ENCODE measurements at regions of chr4 and their contacts with region 1.

Region 1: DNA sequence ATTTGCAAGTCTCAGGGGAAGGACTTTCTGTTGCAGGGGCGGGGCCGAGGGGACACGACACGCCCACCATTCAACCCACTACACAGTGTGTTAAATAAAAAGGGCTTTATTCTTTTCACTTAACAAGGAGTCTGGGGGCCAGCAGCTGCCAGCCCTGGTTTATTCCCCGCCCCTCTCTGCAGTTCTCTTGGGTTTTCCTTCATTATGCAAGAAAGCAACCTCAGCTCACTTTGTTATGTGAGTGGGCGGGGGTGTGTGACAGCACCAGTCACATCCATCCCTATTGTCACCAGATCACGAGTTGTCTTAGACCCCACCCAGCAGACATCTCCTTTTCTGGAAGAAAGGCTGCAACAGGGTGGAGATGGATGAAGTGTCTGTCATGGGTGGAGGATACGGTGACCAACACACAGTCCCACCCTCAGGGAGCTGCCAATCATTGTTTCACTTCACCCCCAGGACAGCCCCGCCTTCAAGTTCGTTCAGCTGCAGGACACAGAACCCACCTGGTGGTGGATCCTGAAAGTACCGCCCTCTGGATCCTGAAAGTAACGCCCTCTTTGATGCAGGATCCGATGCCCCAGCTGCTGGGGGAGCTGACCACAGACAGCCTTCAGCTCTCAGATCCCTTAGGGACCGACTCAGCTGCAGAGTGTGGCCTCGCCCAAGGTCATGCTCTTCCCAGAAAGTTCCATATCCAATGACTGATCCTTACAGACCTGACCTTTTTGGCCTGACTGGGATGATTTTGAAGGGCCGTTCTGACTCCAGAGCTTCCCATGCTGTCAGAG is 79.6 kb downstream of the SMIM20 start:
- DNase-seq: peak; percentile 65
- H3K4me3 ChIP-seq: peak overlapping the region; percentile 21
- H3K27ac ChIP-seq: no peak overlapping the region
- H3K4me1 ChIP-seq: peaks cover 12% of the 10 kb centered on the region
- CTCF ChIP-seq: peak; percentile 77

Region 2: DNA sequence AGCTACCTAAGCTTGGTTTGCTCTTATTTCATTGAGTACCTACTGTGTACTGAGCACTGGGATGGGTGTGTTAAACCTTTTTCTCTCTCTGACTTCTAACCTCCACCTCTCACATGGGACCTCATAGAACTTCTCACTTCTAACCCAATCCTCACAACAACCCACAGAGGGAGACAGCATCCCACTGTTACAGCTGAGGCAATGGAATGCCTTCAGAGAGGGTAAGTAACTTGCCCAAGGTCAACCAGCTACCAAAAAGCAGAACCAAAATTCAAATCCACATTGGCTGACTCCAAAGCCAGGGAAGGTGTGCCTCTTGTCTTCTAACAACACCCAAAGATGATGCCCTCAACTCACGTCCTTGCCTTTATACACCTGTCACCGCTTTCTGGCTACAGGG is 136.2 kb before region 1 on chr4:
- CTCF ChIA-PET with region 1: no interaction called
- POLR2A ChIA-PET with region 1: no interaction called
- intact Hi-C with region 1: loop called (anchors 1 kb)
- DNase-seq: peak; percentile 51
- H3K4me3 ChIP-seq: peak overlapping the region; percentile 13
- H3K27ac ChIP-seq: no peak overlapping the region
- H3K4me1 ChIP-seq: peaks cover 75% of the 10 kb centered on the region
- CTCF ChIP-seq: peak; percentile 75

Region 3: GRCh38 chr4:26325191-26325590 is 331.6 kb after region 1 on chr4:
- CTCF ChIA-PET with region 1: no interaction called
- POLR2A ChIA-PET with region 1: no interaction called
- intact Hi-C with region 1: loop called (anchors 2 kb)
- DNase-seq: peak; percentile 57
- H3K4me3 ChIP-seq: no peak overlapping the region
- H3K27ac ChIP-seq: no peak overlapping the region
- H3K4me1 ChIP-seq: peaks cover 23% of the 10 kb centered on the region
- CTCF ChIP-seq: peak; percentile 82

Region 4: GRCh38 chr4:26410385-26411293 is 417.0 kb after region 1 on chr4:
- CTCF ChIA-PET with region 1: no interaction called
- POLR2A ChIA-PET with region 1: no interaction called
- intact Hi-C with region 1: loop called (anchors 1 kb)
- DNase-seq: peak; percentile 65
- H3K4me3 ChIP-seq: no peak overlapping the region
- H3K27ac ChIP-seq: no peak overlapping the region
- H3K4me1 ChIP-seq: peaks cover 7% of the 10 kb centered on the region
- CTCF ChIP-seq: peak; percentile 93

Measured in OCI-LY7 (cell line).